Right lobe of liver (tissue), 6 donors: ENCODE measurements at regions of chr14 and their contacts with region 1.

Region 1: GRCh38 chr14:24741871-24742270 is 107.9 kb upstream of the GZMB start:
- DNase-seq: no peak
- ATAC-seq: no peak
- H3K4me3 ChIP-seq: no peak overlapping the region
- H3K27ac ChIP-seq: no peak overlapping the region
- H3K4me1 ChIP-seq: no peaks in the 10 kb centered on the region
- H3K27me3 ChIP-seq: no peaks in the 10 kb centered on the region
- CTCF ChIP-seq: no peak
- POLR2A ChIP-seq: no peak

Region 2: GRCh38 chr14:24806061-24806678 is 64.3 kb after region 1 on chr14:
- intact Hi-C with region 1: loop called in 1 of 2 experiments (anchors 10 kb)
- DNase-seq: peak; percentile 75 to 81 (median 81)
- ATAC-seq: peak; percentile 68 to 84 (median 78)
- H3K4me3 ChIP-seq: no peak overlapping the region
- H3K27ac ChIP-seq: peak overlapping the region in 1 of 3 donors; percentile 82
- H3K4me1 ChIP-seq: peaks cover 0 to 29% (median 8%) of the 10 kb centered on the region in 4 donors
- H3K27me3 ChIP-seq: no peaks in the 10 kb centered on the region
- CTCF ChIP-seq: peak; percentile 89 to 95 (median 92)
- POLR2A ChIP-seq: no peak